AG04450 (cell line): ENCODE measurements at regions of chr1 and their contacts with region 1.

Region 1: GRCh38 chr1:153572569-153573015 is 6.9 kb upstream of the S100A2 start:
- DNase-seq: no peak
- H3K4me3 ChIP-seq: peak overlapping the region; percentile 18; the same call in 1 of the 2 replicates
- H3K27ac ChIP-seq: peak overlapping the region; percentile 77
- H3K27me3 ChIP-seq: no peaks in the 10 kb centered on the region
- CTCF ChIP-seq: peak; percentile 89

Region 2: DNA sequence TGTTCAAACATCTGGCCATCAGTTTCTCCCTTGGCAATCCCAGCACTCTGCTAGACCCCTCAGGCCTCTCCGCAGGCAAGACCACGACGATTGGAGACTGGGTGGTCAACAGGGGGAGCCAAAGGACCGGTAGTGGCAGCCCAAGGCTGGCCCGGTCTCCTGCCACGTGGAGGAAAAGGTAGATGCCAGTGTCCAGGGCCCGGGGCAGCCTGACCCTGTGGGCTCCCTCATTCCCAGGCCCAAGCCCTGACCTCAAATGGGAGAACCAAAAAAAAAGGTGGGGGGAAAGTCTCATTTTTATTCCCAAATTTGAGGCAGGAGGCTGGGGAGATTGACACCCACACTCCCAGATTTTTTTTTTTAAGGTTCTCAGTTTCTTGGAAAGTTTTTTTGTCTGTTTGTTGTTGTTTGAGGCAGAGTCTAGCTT is 61.6 kb before region 1 on chr1:
- CTCF ChIA-PET with region 1: interaction called, 163 read pairs
- POLR2A ChIA-PET with region 1: interaction called, 6 read pairs
- DNase-seq: peak; percentile 42
- H3K4me3 ChIP-seq: no peak overlapping the region
- H3K27ac ChIP-seq: no peak overlapping the region
- H3K27me3 ChIP-seq: no peaks in the 10 kb centered on the region
- CTCF ChIP-seq: peak; percentile 98

Region 3: DNA sequence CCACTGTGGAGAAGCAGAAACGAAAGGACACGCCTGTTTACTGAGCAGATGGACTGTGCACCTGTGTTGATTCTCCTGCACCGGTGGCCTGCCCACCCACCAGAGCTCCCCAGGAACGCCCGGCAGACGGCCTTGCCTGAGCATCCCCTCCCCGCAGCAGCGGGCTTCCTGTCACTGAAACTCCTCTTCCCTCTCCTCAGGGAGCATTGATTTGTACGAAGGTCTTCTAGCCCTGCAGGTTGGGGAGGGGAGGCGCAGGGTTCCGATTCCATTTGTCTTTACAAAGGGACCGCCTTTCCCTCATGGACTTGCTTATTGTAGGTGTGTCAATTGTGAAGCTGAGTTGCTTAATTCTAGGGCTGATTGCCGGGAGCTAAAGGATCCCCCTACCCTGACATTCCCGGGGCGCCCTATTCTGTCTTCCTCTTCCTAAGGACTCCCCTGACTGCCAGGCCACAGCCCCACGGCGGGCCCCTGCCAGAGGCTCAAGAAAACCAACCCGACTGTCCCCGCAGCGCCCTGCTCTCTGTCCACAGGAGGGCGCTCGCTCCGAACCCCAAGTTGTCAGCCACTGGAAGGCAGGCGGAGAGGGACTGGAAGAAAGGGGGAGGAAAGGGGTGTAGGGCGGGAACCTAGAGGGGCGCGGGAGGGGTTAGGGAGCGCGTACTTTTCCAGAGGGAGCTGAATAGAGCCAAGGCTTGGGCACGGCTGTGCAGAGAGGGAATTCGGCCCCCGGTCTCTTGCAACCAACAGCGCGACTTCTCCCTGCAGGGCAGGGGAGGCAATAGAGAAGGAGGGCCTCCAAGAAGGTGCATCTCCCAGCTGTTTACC is 39.6 kb before region 1 on chr1:
- CTCF ChIA-PET with region 1: interaction called, 165 read pairs
- POLR2A ChIA-PET with region 1: interaction called, 20 read pairs
- DNase-seq: peak; percentile 52
- H3K4me3 ChIP-seq: peak overlapping the region; percentile 98
- H3K27ac ChIP-seq: peak overlapping the region; percentile 96
- H3K27me3 ChIP-seq: no peaks in the 10 kb centered on the region
- CTCF ChIP-seq: peak; percentile 88

Region 4: GRCh38 chr1:153587314-153587713 is 14.7 kb after region 1 on chr1:
- CTCF ChIA-PET with region 1: interaction called, 33 read pairs
- POLR2A ChIA-PET with region 1: no interaction called
- DNase-seq: no peak
- H3K4me3 ChIP-seq: no peak overlapping the region
- H3K27ac ChIP-seq: no peak overlapping the region
- H3K27me3 ChIP-seq: no peaks in the 10 kb centered on the region
- CTCF ChIP-seq: no peak

Region 5: DNA sequence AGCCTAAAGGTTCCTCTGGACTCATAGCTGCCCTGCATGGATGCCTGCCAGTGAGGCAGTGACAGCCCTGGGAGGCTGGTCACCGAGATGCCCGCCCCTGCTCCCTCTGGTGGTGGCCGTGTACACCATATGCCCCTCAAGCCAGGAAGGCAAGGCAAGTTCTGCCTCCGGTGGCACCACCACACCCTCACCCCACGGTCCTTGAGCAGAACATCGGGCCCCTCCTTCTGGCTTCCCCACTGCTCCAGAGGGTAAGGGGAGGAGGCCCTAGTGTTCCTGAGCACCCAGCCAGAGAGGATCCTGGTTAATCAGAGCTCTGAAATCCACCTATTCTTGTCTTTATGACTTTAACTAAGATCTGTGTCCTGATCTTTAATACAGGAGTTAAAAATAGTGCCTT is 45.1 kb after region 1 on chr1:
- CTCF ChIA-PET with region 1: interaction called, 74 read pairs
- POLR2A ChIA-PET with region 1: interaction called, 8 read pairs
- DNase-seq: no peak
- H3K4me3 ChIP-seq: no peak overlapping the region
- H3K27ac ChIP-seq: no peak overlapping the region
- H3K27me3 ChIP-seq: no peaks in the 10 kb centered on the region
- CTCF ChIP-seq: peak; percentile 61

Region 6: DNA sequence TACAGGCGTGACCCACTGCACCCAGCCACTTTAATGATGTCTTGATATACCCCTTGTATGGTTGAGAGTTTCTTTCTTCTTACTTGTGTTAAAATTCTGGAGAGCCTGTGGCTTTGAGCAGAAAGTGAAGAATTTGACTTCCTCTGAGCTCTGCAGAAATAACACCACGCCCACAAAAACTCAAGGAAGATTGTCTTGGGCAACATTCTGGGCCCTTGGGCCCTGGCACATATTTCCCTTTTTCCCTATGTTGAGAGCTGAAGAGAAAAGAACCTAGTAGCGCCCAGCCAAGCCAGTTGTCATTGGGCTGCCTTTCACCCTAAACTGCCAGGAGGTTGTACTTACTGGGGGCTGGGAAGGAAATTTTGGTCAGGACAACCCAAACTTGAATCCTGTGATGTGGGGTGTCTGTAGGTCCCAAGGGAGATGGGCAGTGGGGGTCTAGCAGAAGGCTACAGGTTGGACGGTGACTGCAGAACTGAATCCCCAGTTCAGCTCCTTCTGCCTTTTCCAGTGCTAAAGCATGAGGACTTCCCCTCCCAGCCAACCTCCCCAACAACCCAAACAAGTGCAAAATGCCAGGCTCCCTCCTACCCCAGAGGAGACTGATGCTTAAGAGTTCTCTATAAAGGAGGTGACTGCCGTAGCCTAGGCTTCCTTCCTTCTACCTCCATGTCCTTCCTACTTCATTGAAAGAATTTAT is 74.2 kb after region 1 on chr1:
- CTCF ChIA-PET with region 1: interaction called, 12 read pairs
- POLR2A ChIA-PET with region 1: interaction called, 4 read pairs
- DNase-seq: no peak
- H3K4me3 ChIP-seq: no peak overlapping the region
- H3K27ac ChIP-seq: no peak overlapping the region
- H3K27me3 ChIP-seq: no peaks in the 10 kb centered on the region
- CTCF ChIP-seq: no peak

Region 7: GRCh38 chr1:153717330-153717729 is 144.7 kb after region 1 on chr1:
- CTCF ChIA-PET with region 1: no interaction called
- POLR2A ChIA-PET with region 1: no interaction called
- DNase-seq: no peak
- H3K4me3 ChIP-seq: no peak overlapping the region
- H3K27ac ChIP-seq: no peak overlapping the region
- H3K27me3 ChIP-seq: no peaks in the 10 kb centered on the region
- CTCF ChIP-seq: no peak

Region 8: GRCh38 chr1:153929981-153930948 is 357.7 kb after region 1 on chr1:
- CTCF ChIA-PET with region 1: no interaction called
- POLR2A ChIA-PET with region 1: no interaction called
- DNase-seq: no peak
- H3K4me3 ChIP-seq: no peak overlapping the region
- H3K27ac ChIP-seq: no peak overlapping the region
- H3K27me3 ChIP-seq: no peaks in the 10 kb centered on the region
- CTCF ChIP-seq: no peak